Activated CD4-positive, alpha-beta T cell treated with anti-CD3 and anti-CD28 coated beads, Interleukin-2, amount 10 ng/mL, durations not matched to agents 24 days and 14 days (primary cell): ENCODE measurements at regions of chr16 and their contacts with region 1.

Region 1: GRCh38 chr16:74998481-74999218 is at the start of gene ZNRF1:
- DNase-seq: peak; percentile 93
- H3K4me3 Mint-ChIP-seq: peak within 1 kb of the TSS; percentile 96
- H3K27ac Mint-ChIP-seq: peak within 1 kb of the TSS; percentile 87
- H3K4me1 Mint-ChIP-seq: peaks cover 38% of the 10 kb centered on the region
- H3K27me3 Mint-ChIP-seq: peaks cover 11% of the 10 kb centered on the region
- total RNA-seq, gene ZNRF1: 41.4 and 46.8 TPM in 2 replicates

Region 2: GRCh38 chr16:73768786-73769203 is 1229.9 kb before region 1 on chr16:
- intact Hi-C with region 1: no loop called
- DNase-seq: no peak
- H3K4me3 Mint-ChIP-seq: no peak overlapping the region
- H3K27ac Mint-ChIP-seq: no peak overlapping the region
- H3K4me1 Mint-ChIP-seq: no peaks in the 10 kb centered on the region
- H3K27me3 Mint-ChIP-seq: no peaks in the 10 kb centered on the region

Region 3: DNA sequence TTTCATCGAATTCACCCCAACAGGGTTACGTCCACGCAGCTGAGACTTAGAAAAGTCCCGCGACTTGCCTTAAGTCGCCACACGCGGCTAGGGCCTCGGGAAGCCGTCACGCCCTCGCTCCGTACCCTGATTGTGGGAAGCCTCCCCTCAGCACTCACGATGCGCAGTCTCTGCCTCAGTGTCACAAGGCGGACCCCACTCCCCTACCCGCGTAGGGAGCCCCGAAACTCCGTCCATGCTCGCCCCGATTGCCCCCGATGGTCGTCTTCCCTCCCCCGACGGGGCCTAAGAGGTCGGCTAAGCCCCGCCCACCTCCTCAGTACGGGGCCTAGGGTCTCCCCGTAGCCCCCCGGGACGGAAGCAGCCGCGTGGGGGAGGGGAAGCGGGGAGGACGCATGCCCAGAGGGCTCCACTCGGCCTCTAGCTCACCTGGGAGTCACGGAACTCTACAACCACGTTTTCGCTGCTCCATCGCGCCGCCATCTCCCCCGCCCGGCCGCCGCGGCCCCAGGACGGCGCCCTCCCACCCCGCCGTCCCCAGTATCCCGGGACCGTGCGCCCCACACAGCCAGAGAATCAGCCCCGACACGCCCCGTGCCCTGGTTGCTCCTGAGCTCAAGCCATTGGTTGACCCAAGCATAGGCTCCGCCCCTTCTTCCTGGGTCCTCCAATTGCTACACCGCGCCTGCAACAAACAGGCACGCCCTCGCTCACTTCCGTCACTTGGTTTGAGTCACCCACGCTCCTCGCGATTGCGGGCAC is 13.9 kb before region 1 on chr16 and contains the start of gene WDR59:
- intact Hi-C with region 1: loop called (anchors 1 kb)
- DNase-seq: peak; percentile 100
- H3K4me3 Mint-ChIP-seq: peak within 1 kb of the TSS; percentile 94
- H3K27ac Mint-ChIP-seq: peak within 1 kb of the TSS; percentile 95
- H3K4me1 Mint-ChIP-seq: peaks cover 16% of the 10 kb centered on the region
- H3K27me3 Mint-ChIP-seq: no peaks in the 10 kb centered on the region
- total RNA-seq, gene WDR59: 80.6 and 91.5 TPM in 2 replicates

Region 4: DNA sequence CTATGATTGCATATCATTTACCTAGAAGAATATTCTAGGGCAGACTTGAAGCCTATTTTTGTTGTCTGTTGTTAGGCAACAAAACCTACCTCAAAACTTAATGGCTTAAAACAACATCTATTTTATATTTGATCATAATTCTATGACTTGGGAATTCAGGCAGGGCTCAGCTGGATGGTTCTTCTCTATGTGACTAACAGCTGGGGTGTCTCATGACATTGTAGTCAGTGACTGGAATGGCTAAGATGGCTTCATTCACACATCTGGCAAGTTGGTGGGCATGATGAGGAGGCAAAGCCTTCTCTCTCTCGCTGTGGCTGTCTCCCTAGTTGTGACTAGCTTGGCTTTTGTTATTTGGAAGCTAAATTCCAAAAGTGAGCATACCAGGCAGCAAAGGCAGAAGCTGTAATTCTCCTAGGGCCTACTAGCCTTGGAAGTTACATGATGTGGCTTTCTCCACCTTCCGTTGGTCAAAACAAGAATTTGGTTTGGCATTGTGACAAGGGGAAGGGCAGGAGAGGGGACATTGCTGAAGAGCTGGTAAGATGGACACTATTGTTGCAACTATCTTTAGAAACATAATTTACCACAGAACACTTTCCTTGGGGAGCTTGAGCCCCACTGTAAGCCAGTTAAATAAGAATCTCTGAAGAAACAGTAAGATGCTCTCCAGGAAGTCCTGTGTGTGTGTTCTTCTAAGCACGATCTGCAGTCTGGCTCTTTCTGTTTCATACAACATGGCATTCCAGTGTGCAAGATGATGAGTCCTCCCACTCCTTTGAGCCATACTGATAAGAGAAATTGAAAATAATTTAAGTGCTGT is 39.6 kb after region 1 on chr16:
- intact Hi-C with region 1: loop called (anchors 5 kb)
- DNase-seq: no peak
- H3K4me3 Mint-ChIP-seq: no peak overlapping the region
- H3K27ac Mint-ChIP-seq: no peak overlapping the region
- H3K4me1 Mint-ChIP-seq: peaks cover 17% of the 10 kb centered on the region
- H3K27me3 Mint-ChIP-seq: no peaks in the 10 kb centered on the region

Region 5: DNA sequence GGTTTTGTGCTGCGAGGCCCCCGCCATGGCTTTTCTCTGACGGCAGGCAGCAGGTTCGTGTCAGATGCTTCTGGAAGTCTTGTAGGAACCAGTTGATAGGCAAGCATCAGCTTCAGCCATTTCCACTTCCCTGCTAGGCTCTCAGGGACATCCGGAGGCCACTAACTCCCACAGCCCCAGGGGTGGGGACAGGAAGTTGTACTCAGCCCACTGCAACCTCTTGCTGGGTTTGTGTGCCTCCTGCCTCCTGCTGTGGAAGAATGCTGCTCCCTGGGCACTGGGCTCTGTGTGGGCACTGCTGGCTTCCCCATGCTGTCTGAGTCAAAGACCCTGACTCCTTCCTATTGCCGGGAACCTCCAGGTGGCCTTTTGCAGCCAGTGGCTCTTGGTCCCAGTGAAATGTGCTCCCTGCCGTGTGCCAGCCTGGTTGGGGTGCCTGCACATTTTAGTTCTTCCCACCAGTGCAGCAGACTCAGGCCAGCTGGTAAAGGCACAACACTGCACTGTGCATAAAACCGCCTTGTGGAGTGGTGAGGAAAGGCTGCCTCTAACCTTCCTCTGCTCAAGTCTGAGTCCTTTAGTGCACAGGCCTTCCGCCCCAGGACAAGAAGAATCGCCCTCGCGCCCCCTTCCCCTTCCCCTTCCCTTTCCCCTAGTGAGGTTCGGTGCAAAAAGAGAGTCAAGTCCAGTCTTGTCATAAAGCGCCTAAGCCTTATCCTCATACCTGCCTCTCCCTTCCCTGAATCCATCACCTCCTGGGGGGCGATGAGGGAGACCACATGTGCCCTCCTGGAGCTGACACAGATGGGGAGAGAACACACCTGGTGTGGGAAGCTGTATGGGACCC is 101.3 kb after region 1 on chr16:
- intact Hi-C with region 1: loop called (anchors 1 kb)
- DNase-seq: peak; percentile 86
- H3K4me3 Mint-ChIP-seq: peak overlapping the region; percentile 74
- H3K27ac Mint-ChIP-seq: peak overlapping the region; percentile 95
- H3K4me1 Mint-ChIP-seq: peaks cover 63% of the 10 kb centered on the region
- H3K27me3 Mint-ChIP-seq: no peaks in the 10 kb centered on the region

Region 6: DNA sequence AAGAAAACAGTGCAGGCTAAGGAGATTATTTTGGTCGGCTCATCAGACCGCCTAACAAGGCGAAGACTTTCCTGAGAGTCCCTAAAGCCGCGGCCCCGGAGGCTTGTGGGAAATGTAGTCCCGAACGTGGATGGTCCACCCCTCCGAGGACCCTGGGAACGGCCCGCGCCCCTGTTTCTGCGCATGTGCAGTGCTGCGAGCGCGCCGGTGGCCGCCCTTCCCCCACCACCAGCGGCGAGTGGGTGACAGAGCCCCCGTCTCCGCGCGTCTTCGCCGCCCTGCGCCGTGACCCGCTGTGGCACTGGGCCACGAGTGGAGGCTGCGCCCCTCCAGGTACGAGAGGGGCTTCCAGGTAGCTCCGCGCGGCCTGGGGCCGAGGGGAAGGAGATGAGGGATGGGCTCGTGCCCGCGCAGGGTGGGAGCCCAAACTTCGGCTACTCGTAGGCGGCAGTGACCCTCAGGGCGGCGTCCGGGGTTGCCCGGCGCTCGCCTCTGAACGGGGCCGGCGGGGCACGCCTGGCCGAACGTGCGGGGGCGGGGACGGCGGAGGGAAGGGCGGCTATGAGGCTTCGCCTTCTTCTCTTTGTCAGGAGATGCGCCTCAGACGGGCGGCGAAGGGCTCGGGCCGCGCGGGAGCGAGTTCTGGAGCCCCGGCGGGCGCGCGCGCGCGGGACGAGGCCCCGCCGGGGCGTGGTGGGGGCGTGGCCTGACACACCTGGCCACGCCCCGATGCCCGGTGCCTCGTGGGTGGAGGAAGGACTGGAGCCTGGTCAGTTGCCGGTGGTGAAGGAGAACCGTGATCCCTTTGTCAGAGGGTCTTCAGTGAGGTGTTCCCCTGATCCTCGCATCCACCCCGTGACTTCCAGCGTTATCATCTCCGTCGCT is 149.9 kb after region 1 on chr16 and contains the start of gene ZFP1:
- intact Hi-C with region 1: loop called (anchors 1 kb)
- DNase-seq: peak; percentile 98
- H3K4me3 Mint-ChIP-seq: peak within 1 kb of the TSS; percentile 92
- H3K27ac Mint-ChIP-seq: peak within 1 kb of the TSS; percentile 87
- H3K4me1 Mint-ChIP-seq: peaks cover 19% of the 10 kb centered on the region
- H3K27me3 Mint-ChIP-seq: no peaks in the 10 kb centered on the region
- total RNA-seq, gene ZFP1: 14.3 and 16.5 TPM in 2 replicates